ENCODE measurements at regions of chr11 and their contacts with region 1.

Region 1: GRCh38 chr11:123407130-123407995 is 22.7 kb upstream of the GRAMD1B start:
- DNase-seq: peak; percentile 83
- H3K4me3 Mint-ChIP-seq: peak overlapping the region; percentile 61
- H3K27ac Mint-ChIP-seq: peak overlapping the region; percentile 37
- H3K4me1 Mint-ChIP-seq: peaks cover 36% of the 10 kb centered on the region
- H3K27me3 Mint-ChIP-seq: peaks cover 18% of the 10 kb centered on the region

Region 2: GRCh38 chr11:123219066-123219690 is 188.2 kb before region 1 on chr11:
- CTCF ChIA-PET with region 1: no interaction called
- intact Hi-C with region 1: no loop called
- DNase-seq: no peak
- H3K4me3 Mint-ChIP-seq: no peak overlapping the region
- H3K27ac Mint-ChIP-seq: no peak overlapping the region
- H3K4me1 Mint-ChIP-seq: no peaks in the 10 kb centered on the region
- H3K27me3 Mint-ChIP-seq: peaks cover 2% of the 10 kb centered on the region

Region 3: GRCh38 chr11:123351375-123351774 is 56.0 kb before region 1 on chr11:
- CTCF ChIA-PET with region 1: interaction called, 23 read pairs
- intact Hi-C with region 1: no loop called
- DNase-seq: no peak
- H3K4me3 Mint-ChIP-seq: no peak overlapping the region
- H3K27ac Mint-ChIP-seq: no peak overlapping the region
- H3K4me1 Mint-ChIP-seq: peaks cover 9% of the 10 kb centered on the region
- H3K27me3 Mint-ChIP-seq: peaks cover 35% of the 10 kb centered on the region

Region 4: DNA sequence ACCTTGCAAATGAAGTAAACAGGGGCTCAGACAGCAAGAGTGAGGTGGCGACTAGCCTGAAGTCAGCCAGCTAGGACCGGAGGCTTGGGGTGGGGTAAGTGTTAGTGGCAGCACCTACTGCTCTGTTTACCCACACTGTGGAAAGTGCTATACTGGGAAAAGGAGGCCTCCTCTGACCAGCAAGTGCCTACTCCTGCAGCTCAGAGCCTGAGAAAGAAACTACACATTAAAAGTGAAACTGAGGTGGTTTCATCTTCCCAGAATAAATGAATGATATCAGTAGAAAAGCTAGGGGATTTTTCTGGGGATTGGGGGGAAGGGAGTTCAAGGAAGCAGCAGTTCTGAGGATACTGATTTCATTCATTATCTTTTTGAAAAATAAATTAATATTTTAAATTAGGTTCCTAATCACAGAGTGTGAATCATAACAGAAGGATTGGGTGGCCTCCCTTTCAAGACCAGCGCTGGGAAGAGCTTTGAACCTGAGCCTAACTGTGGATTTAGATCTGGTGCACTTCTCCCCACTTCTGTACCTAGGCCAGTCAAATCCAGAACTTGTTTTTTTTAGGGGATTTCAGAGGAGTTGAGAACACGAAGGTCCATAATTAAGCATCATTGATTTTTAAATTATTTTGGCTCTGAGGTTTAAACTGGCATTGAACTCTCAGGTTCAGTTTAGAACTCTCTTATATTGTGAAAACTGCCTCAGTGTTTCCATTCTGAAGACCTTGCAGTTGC is 25.4 kb before region 1 on chr11:
- CTCF ChIA-PET with region 1: interaction called, 21 read pairs
- intact Hi-C with region 1: loop called (anchors 1 kb)
- DNase-seq: peak; percentile 85
- H3K4me3 Mint-ChIP-seq: peak overlapping the region; percentile 58
- H3K27ac Mint-ChIP-seq: peak overlapping the region; percentile 78
- H3K4me1 Mint-ChIP-seq: peaks cover 18% of the 10 kb centered on the region
- H3K27me3 Mint-ChIP-seq: peaks cover 6% of the 10 kb centered on the region

Region 5: GRCh38 chr11:123438191-123438627 is 30.8 kb after region 1 on chr11:
- CTCF ChIA-PET with region 1: interaction called, 31 read pairs
- intact Hi-C with region 1: no loop called
- DNase-seq: no peak
- H3K4me3 Mint-ChIP-seq: no peak overlapping the region
- H3K27ac Mint-ChIP-seq: no peak overlapping the region
- H3K4me1 Mint-ChIP-seq: peaks cover 41% of the 10 kb centered on the region
- H3K27me3 Mint-ChIP-seq: no peaks in the 10 kb centered on the region

Region 6: GRCh38 chr11:123478352-123478987 is 71.1 kb after region 1 on chr11:
- CTCF ChIA-PET with region 1: interaction called, 129 read pairs
- intact Hi-C with region 1: loop called (anchors 1 kb)
- DNase-seq: peak; percentile 43
- H3K4me3 Mint-ChIP-seq: no peak overlapping the region
- H3K27ac Mint-ChIP-seq: no peak overlapping the region
- H3K4me1 Mint-ChIP-seq: peaks cover 26% of the 10 kb centered on the region
- H3K27me3 Mint-ChIP-seq: no peaks in the 10 kb centered on the region

Region 7: GRCh38 chr11:123580557-123581275 is 173.4 kb after region 1 on chr11:
- CTCF ChIA-PET with region 1: interaction called, 7 read pairs
- intact Hi-C with region 1: loop called (anchors 1 kb)
- DNase-seq: peak; percentile 78
- H3K4me3 Mint-ChIP-seq: no peak overlapping the region
- H3K27ac Mint-ChIP-seq: no peak overlapping the region
- H3K4me1 Mint-ChIP-seq: peaks cover 9% of the 10 kb centered on the region
- H3K27me3 Mint-ChIP-seq: peaks cover 2% of the 10 kb centered on the region